HepG2 (cell line): ENCODE measurements at regions of chr9 and their contacts with region 1.

Region 1: DNA sequence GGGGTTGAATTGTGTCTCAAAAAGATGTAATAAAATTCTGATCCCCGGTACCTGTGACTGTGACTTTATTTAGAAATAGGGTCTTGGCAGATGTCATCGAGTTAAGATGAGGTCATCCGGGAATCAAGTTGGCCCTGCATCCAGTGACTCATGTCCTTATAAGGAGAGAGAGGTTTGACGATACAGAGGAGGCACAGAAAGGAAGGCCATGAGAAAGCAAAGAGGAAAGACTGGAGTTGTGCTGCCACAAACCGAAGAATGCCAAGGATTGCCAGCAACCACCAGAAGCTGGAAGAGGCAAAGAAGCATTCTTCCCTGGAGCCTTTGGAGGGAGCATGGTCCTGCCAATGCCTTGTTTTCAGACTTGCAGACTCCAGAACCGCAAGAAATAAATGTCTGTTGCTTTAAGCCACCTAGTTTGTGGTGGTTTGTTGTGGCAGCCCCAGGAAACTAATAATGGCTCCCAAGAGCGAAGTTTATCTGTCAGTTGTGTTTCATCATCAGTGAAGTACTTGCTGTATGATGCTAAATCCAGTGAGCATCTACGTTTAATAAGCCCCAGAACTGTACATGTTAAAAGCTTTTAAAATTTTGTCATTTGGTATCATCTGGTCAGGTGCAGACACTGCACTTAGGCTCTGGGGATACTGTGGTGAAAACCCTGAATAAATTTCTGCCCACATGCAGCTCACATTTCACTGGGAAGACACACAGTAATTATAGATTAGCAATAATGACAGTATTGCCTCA is 114.8 kb downstream of the TLE4 start:
- DNase-seq: no peak
- ATAC-seq: no peak
- H3K4me3 ChIP-seq: no peak overlapping the region
- H3K27ac ChIP-seq: no peak overlapping the region
- H3K4me1 ChIP-seq: no peaks in the 10 kb centered on the region
- H3K27me3 ChIP-seq: no peaks in the 10 kb centered on the region
- CTCF ChIP-seq: no peak
- EP300 ChIP-seq: no peak
- POLR2A ChIP-seq: no peak
- RAD21 ChIP-seq: no peak

Region 2: DNA sequence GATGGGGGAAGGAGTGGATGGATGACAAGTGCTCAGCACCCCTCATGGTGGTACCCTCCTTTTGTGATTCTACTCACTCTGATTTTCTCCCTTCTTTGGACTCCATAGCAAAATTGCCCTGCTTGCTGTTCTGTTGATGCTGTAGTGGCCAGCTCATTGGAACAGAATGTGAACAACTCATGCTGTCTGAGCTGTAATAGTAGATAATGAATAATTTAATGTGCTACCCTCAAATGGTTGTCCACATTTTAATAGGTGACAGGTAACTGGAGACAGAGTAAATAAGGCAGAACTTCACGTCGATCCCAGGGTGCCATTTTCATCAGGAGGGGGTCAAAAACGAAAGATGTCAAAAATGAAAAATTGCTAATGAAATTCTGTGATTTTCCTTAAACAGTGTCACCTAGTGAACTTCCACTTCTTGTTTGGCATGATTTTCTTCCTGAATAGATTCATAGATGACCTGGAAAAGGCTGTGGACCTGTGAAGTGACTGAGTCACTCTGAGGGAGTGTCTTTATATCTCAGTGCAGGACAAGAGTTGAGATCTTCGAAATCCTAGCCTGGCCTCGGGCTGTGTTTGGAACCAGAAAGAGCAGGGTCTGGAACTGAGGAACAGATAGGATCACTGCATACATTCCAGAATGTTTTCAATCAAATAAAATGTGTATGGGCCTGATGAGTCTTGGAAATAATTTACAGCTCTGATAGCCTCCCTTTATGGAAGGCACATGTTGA is 1119.4 kb before region 1 on chr9:
- CTCF ChIA-PET with region 1: no interaction called
- POLR2A ChIA-PET with region 1: no interaction called
- in situ Hi-C with region 1: no loop called
- intact Hi-C with region 1: loop called (anchors 5 kb)
- DNase-seq: no peak
- ATAC-seq: no peak
- H3K4me3 ChIP-seq: no peak overlapping the region
- H3K27ac ChIP-seq: no peak overlapping the region
- H3K4me1 ChIP-seq: no peaks in the 10 kb centered on the region
- H3K27me3 ChIP-seq: peaks cover 0 to 2% of the 10 kb centered on the region in 2 experiments; a peak in 2 of 5 replicates
- CTCF ChIP-seq: no peak
- EP300 ChIP-seq: no peak
- POLR2A ChIP-seq: no peak
- RAD21 ChIP-seq: no peak

Region 3: DNA sequence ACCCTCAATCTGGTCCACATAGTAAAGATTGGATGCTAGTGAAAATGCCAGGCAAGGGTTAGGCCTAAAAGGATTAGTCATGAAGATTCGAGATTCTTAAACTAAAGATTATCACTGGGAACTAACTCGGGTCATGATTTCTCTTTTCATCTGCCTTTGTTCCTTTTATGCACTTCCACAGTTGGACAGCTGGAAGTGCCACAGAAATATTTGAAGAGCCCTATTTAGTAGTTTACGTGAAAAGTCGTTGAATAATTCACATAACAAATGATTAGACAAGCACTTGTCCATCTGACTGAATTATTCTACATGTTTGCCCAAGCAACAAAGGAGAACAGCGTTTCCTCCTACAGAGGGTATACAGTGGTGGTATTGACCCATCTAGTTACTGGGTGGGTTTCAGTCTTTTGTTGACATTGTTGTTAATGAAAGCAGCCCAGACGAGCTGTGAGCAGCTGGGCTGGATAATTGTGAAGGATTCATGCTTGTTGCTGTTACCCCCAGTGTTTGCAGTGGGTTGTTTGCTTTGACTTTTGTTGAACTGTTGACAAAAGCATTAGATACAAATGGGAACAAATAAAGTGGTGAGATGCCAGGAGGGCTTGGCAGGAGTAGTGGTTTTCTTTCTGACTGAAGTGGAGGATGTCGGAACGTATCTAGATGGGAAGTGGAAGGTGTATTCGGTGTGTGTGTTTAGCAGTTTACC is 18.7 kb before region 1 on chr9:
- CTCF ChIA-PET with region 1: no interaction called
- POLR2A ChIA-PET with region 1: no interaction called
- in situ Hi-C with region 1: no loop called
- intact Hi-C with region 1: loop called (anchors 2 kb)
- DNase-seq: peak; percentile 38
- ATAC-seq: peak; percentile 46; the same call in 2 of the 3 replicates
- H3K4me3 ChIP-seq: no peak overlapping the region
- H3K27ac ChIP-seq: no peak overlapping the region
- H3K4me1 ChIP-seq: 0 out of 2 replicates have a peak, but pooled peaks cover 9% of the 10 kb centered on the region
- H3K27me3 ChIP-seq: no peaks in the 10 kb centered on the region
- CTCF ChIP-seq: no peak
- EP300 ChIP-seq: no peak
- POLR2A ChIP-seq: no peak
- RAD21 ChIP-seq: no peak